ENCODE measurements at regions of chr3 and their contacts with region 1.

Region 1: DNA sequence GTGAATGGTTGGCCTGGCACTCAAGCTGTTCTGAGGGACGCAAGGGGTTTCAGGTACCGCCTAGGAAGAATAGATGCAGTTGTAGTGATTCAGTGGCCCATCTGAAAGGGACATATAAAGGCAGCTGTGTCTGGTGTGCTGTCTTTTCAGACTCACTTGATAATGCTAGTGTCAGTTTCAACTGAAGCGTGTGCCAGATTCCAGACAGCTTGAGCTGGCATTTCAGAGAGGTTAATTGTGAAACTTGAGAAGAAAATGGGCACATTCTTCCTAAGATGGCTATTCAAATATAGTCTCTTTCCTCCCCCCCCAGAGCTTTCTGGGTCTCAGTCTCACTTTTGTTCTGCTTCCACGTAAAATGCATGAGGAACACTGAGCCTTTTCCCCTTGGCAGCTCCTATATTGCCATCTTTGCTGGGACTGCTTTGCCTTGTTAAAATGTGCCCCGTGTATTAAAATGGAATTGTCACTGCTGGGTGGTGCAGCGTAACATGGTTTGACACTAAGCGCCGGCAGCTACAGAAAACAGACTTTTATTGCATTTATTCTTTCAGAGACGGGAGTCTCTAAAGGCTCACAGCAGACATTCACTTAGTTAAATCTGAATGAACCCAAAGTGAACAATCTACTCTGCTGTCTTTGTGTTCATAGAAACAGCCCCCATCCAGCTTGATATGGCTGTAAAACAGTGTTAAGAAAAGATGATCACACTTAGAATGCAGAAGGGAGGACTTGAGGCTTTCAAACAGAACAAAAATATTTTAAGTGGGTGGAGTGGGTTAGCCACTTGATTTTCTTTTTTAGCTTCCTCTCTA is 478.7 kb downstream of the RBMS3 start:
- DNase-seq: no peak
- H3K4me3 ChIP-seq: no peak overlapping the region
- H3K27ac ChIP-seq: peak overlapping the region; percentile 44 to 70 (median 62)
- H3K4me1 ChIP-seq: peaks cover 0 to 38% (median 4%) of the 10 kb centered on the region in 4 donors
- H3K27me3 ChIP-seq: no peaks in the 10 kb centered on the region
- CTCF ChIP-seq: no peak
- EP300 ChIP-seq: no peak
- POLR2A ChIP-seq: no peak

Region 2: GRCh38 chr3:29415482-29416223 is 344.0 kb before region 1 on chr3:
- in situ Hi-C with region 1: no loop called
- intact Hi-C with region 1: no loop called
- DNase-seq: no peak
- H3K4me3 ChIP-seq: no peak overlapping the region
- H3K27ac ChIP-seq: no peak overlapping the region
- H3K4me1 ChIP-seq: no peaks in the 10 kb centered on the region
- H3K27me3 ChIP-seq: no peaks in the 10 kb centered on the region
- CTCF ChIP-seq: no peak
- EP300 ChIP-seq: no peak
- POLR2A ChIP-seq: no peak

Region 3: GRCh38 chr3:29525254-29525881 is 234.2 kb before region 1 on chr3:
- in situ Hi-C with region 1: no loop called
- intact Hi-C with region 1: loop called (anchors 10 kb)
- DNase-seq: peak; percentile 16
- H3K4me3 ChIP-seq: no peak overlapping the region
- H3K27ac ChIP-seq: peak overlapping the region; percentile 41 to 66 (median 62)
- H3K4me1 ChIP-seq: peaks cover 5 to 20% (median 9%) of the 10 kb centered on the region in 4 donors
- H3K27me3 ChIP-seq: no peaks in the 10 kb centered on the region
- CTCF ChIP-seq: no peak
- EP300 ChIP-seq: no peak
- POLR2A ChIP-seq: no peak

Region 4: DNA sequence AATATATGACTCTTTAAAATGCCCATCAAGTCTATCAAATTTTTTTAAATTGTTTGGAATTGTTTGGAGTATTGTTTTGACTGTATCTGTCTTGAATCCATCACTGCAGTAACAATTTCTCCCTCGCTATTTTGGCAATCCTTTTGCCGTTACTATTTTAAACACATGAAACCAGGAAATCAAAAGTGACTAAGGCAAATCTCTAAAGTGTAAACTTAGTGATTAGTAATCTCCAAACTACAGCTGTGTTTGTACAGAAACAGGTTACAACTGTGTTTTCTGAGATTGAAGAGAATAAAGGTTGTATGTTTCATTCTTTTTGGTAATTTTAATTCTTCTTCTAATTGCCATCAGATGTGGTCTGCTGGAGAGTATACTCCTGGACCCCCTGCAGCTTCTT is 13.5 kb before region 1 on chr3:
- in situ Hi-C with region 1: no loop called
- intact Hi-C with region 1: no loop called
- DNase-seq: no peak
- H3K4me3 ChIP-seq: no peak overlapping the region
- H3K27ac ChIP-seq: no peak overlapping the region
- H3K4me1 ChIP-seq: no peaks in the 10 kb centered on the region
- H3K27me3 ChIP-seq: no peaks in the 10 kb centered on the region
- CTCF ChIP-seq: no peak
- EP300 ChIP-seq: no peak
- POLR2A ChIP-seq: no peak

Region 5: DNA sequence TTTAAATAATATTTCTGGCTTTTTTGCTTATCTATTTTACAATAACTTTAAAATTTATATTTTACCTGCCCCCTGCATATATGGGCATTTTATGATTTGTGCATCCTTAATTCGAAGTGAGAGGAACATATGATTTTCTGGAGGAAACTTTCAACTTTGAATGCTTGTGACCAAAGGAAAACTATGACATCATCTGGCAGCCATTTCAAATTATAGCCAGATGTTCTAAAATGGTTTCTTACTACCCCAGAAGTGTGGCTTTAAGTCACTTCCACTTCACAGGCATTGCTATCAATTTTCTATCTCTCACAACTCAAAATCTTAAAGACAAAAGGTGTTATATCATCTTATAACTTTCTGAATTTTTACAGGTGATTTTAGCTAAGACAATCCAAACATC is 30.1 kb after region 1 on chr3:
- in situ Hi-C with region 1: no loop called
- intact Hi-C with region 1: no loop called
- DNase-seq: no peak
- H3K4me3 ChIP-seq: no peak overlapping the region
- H3K27ac ChIP-seq: no peak overlapping the region
- H3K4me1 ChIP-seq: no peaks in the 10 kb centered on the region
- H3K27me3 ChIP-seq: no peaks in the 10 kb centered on the region
- CTCF ChIP-seq: no peak
- EP300 ChIP-seq: no peak
- POLR2A ChIP-seq: no peak

Measured in transverse colon (tissue), 4 donors.